PC-9 (cell line): ENCODE measurements at regions of chr3 and their contacts with region 1.

Region 1: GRCh38 chr3:109224333-109224732 is 87.8 kb downstream of the C3orf85 start:
- DNase-seq: peak in 1 of 2 experiments; percentile 34
- H3K4me3 ChIP-seq: no peak overlapping the region
- H3K27ac ChIP-seq: no peak overlapping the region
- H3K4me1 ChIP-seq: no peaks in the 10 kb centered on the region
- H3K27me3 ChIP-seq: no peaks in the 10 kb centered on the region
- CTCF ChIP-seq: peak; percentile 63; the same call in 1 of the 2 replicates

Region 2: DNA sequence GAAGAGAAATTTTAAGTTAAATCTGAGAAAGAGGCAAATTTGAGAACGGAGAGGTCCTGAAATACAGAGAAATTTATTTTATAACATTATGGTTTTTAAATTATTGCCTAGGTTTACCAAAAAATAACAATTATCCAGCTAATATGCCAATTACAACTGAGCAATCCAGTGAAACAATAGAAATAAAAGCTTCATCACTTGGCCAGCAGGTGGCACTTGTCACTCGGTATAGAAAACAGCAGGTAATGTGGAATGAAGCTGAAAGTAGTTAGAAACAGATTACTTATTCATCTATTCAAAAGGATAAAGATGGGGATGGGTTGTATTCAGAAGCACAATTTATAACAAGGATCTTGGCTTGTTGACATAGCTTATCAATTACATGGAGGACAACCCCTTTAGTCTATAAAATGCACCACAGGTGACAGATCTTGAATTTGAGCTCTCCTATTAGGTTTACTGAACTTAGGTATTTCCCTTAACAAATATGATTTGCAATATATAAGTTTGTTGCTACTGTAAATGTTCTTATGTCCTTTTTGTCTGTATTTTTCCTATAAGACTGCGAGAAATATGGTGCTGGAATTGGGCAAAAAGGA is 200.6 kb before region 1 on chr3:
- CTCF ChIA-PET with region 1: interaction called, 8 read pairs
- POLR2A ChIA-PET with region 1: no interaction called
- intact Hi-C with region 1: loop called (anchors 5 kb)
- DNase-seq: peak in 1 of 2 experiments; percentile 37
- H3K4me3 ChIP-seq: no peak overlapping the region
- H3K27ac ChIP-seq: no peak overlapping the region
- H3K4me1 ChIP-seq: no peaks in the 10 kb centered on the region
- H3K27me3 ChIP-seq: no peaks in the 10 kb centered on the region
- CTCF ChIP-seq: peak; percentile 94

Region 3: DNA sequence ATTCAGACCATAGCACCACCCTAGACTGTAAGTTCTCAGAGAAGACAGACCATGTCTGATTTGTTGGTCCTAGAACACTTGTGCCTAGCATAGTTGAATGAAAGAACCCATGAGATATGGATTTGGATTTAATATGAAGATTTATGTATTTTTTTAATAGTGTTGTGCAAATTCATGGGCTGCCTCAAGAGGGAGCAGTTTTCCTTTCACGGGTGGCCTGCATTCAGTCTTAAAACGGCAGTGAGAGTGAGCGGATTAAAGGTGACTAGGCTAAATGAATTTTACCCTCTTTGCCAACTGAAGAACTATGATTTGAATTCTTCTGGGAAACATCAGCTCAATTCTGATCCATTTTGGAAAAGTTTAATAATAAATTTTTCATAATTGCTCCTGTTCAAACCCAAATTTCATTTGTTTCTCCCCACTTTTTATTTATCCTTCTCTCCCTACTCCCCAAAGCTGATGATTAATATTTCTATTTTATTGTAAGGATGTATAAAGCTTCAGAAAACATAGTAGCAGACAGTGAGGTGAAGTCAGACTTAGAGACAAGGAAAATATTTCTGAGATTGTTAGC is 173.7 kb before region 1 on chr3:
- CTCF ChIA-PET with region 1: no interaction called
- POLR2A ChIA-PET with region 1: no interaction called
- intact Hi-C with region 1: loop called (anchors 10 kb)
- DNase-seq: peak in 1 of 2 experiments; percentile 20
- H3K4me3 ChIP-seq: no peak overlapping the region
- H3K27ac ChIP-seq: no peak overlapping the region
- H3K4me1 ChIP-seq: no peaks in the 10 kb centered on the region
- H3K27me3 ChIP-seq: no peaks in the 10 kb centered on the region
- CTCF ChIP-seq: peak; percentile 90

Region 4: GRCh38 chr3:109188741-109189140 is 35.6 kb before region 1 on chr3:
- CTCF ChIA-PET with region 1: no interaction called
- POLR2A ChIA-PET with region 1: no interaction called
- intact Hi-C with region 1: no loop called
- DNase-seq: no peak
- H3K4me3 ChIP-seq: no peak overlapping the region
- H3K27ac ChIP-seq: no peak overlapping the region
- H3K4me1 ChIP-seq: no peaks in the 10 kb centered on the region
- H3K27me3 ChIP-seq: no peaks in the 10 kb centered on the region
- CTCF ChIP-seq: no peak